Motor neuron (in vitro differentiated cells): ENCODE measurements at regions of chr1 and their contacts with region 1.

Region 1: GRCh38 chr1:156129706-156130581 is 15.4 kb downstream of the LMNA start:
- ATAC-seq: peak; percentile 43 to 87 (median 82)
- H3K4me3 ChIP-seq: no peak overlapping the region
- H3K27ac ChIP-seq: peak overlapping the region; percentile 16 to 35
- H3K4me1 ChIP-seq: peaks cover 18 to 31% of the 10 kb centered on the region in 2 donors

Region 2: GRCh38 chr1:155553349-155553748 is 576.6 kb before region 1 on chr1:
- in situ Hi-C with region 1: no loop called
- ATAC-seq: no peak
- H3K4me3 ChIP-seq: no peak overlapping the region
- H3K27ac ChIP-seq: no peak overlapping the region
- H3K4me1 ChIP-seq: no peaks in the 10 kb centered on the region

Region 3: DNA sequence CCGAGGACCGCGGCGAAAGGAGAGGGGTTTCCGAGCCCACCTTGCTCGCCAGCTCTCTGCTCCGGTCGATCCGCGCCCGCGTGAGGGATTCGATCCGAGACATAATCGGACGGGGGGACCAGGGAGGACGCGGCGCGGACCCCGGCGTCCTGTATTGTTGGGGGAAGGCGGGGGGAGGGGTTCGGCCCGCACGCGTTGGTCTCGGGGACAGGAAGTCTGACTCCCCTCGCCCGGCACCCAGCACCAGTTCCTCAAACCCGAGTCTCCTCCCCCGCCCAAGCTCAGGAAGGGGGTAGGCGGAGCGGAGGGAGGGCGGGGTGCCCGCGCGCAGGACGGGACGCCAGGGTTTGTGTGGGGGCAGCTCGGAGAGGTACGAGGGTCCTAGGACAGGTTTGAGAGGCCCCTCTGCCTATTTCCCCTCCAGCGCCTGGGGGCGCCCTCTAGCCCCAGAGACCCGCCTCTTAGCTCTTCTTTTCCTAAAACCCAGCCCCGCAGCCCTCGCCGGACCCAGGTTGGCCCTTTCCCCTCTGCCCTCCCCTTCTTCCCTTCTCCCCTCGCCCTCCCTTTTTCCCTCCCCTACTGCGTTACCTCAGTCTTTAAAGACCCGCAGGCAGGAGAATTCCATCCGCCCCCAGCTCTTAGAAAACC is 151.5 kb before region 1 on chr1 and contains the start of gene ARHGEF2:
- in situ Hi-C with region 1: no loop called
- ATAC-seq: peak; percentile 16 to 69 (median 36)
- H3K4me3 ChIP-seq: peak within 1 kb of the TSS; percentile 69 to 87 (median 79)
- H3K27ac ChIP-seq: peak within 1 kb of the TSS; percentile 85 to 88
- H3K4me1 ChIP-seq: peaks cover 65 to 72% of the 10 kb centered on the region in 2 donors
- total RNA-seq, gene ARHGEF2: 44.9 to 112 (median 73.5) TPM

Region 4: GRCh38 chr1:156090822-156091188 is 39.1 kb before region 1 on chr1:
- in situ Hi-C with region 1: loop called in 2 of 9 experiments (anchors 5 kb)
- ATAC-seq: peak; percentile 84 to 100 (median 90)
- H3K4me3 ChIP-seq: no peak overlapping the region
- H3K27ac ChIP-seq: no peak overlapping the region
- H3K4me1 ChIP-seq: peaks cover 11 to 22% of the 10 kb centered on the region in 2 donors

Region 5: GRCh38 chr1:156245451-156246232 is 115.7 kb after region 1 on chr1:
- in situ Hi-C with region 1: loop called in 1 of 9 experiments (anchors 25 kb)
- ATAC-seq: peak in 4 of 8 experiments; percentile 6 to 51 (median 20)
- H3K4me3 ChIP-seq: no peak overlapping the region
- H3K27ac ChIP-seq: no peak overlapping the region
- H3K4me1 ChIP-seq: peaks cover 0 to 8% of the 10 kb centered on the region in 2 donors